B cell (primary cell): ENCODE measurements at regions of chr1 and their contacts with region 1.

Region 1: GRCh38 chr1:175146529-175147213 is 45.9 kb downstream of the KIAA0040 start:
- DNase-seq: peak; percentile 73
- ATAC-seq: peak; percentile 82
- H3K4me3 ChIP-seq: no peak overlapping the region
- H3K4me3 Mint-ChIP-seq: no peak overlapping the region
- H3K27ac ChIP-seq: no peak overlapping the region
- H3K27ac Mint-ChIP-seq: peak overlapping the region; percentile 28
- H3K4me1 ChIP-seq: peaks cover 0 to 12% of the 10 kb centered on the region in 2 donors
- H3K4me1 Mint-ChIP-seq: peaks cover 16% of the 10 kb centered on the region
- H3K27me3 ChIP-seq: peaks cover 0 to 15% (median 7%) of the 10 kb centered on the region in 4 experiments
- H3K27me3 Mint-ChIP-seq: peaks cover 27% of the 10 kb centered on the region
- CTCF ChIP-seq: peak; percentile 91

Region 2: DNA sequence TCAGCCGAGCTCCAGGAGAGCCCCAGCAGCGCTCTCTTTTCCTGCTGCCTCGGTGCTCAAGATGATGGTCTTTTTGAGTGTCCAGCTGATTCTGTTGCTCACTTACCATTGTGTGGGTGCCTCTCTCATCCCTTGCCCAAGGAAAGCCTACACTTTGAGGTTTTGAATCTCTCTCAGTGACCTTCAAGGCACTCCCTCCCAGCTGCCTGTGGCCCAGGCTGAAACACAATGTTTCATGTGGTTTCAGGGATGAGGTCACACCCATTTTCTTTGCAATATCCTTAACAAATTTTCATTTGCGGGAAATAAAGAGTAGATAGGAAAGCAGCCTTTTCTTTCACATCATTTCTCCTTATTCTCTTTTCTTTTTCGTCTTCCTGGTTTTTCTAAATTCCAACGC is 110.8 kb before region 1 on chr1:
- CTCF ChIA-PET with region 1: interaction called, 32 read pairs
- POLR2A ChIA-PET with region 1: no interaction called
- intact Hi-C with region 1: no loop called
- DNase-seq: no peak
- ATAC-seq: no peak
- H3K4me3 ChIP-seq: no peak overlapping the region
- H3K4me3 Mint-ChIP-seq: no peak overlapping the region
- H3K27ac ChIP-seq: no peak overlapping the region
- H3K27ac Mint-ChIP-seq: no peak overlapping the region
- H3K4me1 ChIP-seq: no peaks in the 10 kb centered on the region
- H3K4me1 Mint-ChIP-seq: no peaks in the 10 kb centered on the region
- H3K27me3 ChIP-seq: no peaks in the 10 kb centered on the region
- H3K27me3 Mint-ChIP-seq: peaks cover 22% of the 10 kb centered on the region
- CTCF ChIP-seq: no peak

Region 3: GRCh38 chr1:175075572-175076568 is 70.8 kb before region 1 on chr1:
- CTCF ChIA-PET with region 1: no interaction called
- POLR2A ChIA-PET with region 1: no interaction called
- intact Hi-C with region 1: no loop called
- DNase-seq: no peak
- ATAC-seq: no peak
- H3K4me3 ChIP-seq: no peak overlapping the region
- H3K4me3 Mint-ChIP-seq: no peak overlapping the region
- H3K27ac ChIP-seq: no peak overlapping the region
- H3K27ac Mint-ChIP-seq: no peak overlapping the region
- H3K4me1 ChIP-seq: peaks cover 3 to 5% of the 10 kb centered on the region in 2 donors
- H3K4me1 Mint-ChIP-seq: peaks cover 8% of the 10 kb centered on the region
- H3K27me3 ChIP-seq: peaks cover 0 to 14% (median 6%) of the 10 kb centered on the region in 4 experiments
- H3K27me3 Mint-ChIP-seq: peaks cover 39% of the 10 kb centered on the region
- CTCF ChIP-seq: no peak

Region 4: DNA sequence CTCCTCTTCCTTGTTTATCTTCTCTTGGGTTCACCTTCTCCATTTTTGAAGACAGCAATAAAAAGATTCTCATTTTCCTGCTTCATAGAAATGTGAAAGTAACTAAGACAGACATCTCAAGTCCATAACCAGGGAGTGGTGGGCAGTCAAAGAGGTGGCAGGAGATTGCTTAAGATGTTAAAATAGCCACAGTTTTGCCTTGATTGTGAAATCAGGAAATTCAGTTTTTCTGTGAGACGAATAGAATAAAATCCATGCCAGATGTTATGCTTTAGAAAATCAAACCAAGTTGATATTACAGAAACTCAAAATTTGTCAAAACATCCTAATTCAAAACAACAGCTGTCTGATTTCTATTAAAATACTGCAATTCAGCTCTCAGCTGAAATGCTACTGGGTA is 21.8 kb before region 1 on chr1:
- CTCF ChIA-PET with region 1: interaction called, 12 read pairs
- POLR2A ChIA-PET with region 1: no interaction called
- intact Hi-C with region 1: no loop called
- DNase-seq: no peak
- ATAC-seq: no peak
- H3K4me3 ChIP-seq: no peak overlapping the region
- H3K4me3 Mint-ChIP-seq: no peak overlapping the region
- H3K27ac ChIP-seq: no peak overlapping the region
- H3K27ac Mint-ChIP-seq: no peak overlapping the region
- H3K4me1 ChIP-seq: no peaks in the 10 kb centered on the region
- H3K4me1 Mint-ChIP-seq: no peaks in the 10 kb centered on the region
- H3K27me3 ChIP-seq: no peaks in the 10 kb centered on the region
- H3K27me3 Mint-ChIP-seq: peaks cover 6% of the 10 kb centered on the region
- CTCF ChIP-seq: no peak

Region 5: DNA sequence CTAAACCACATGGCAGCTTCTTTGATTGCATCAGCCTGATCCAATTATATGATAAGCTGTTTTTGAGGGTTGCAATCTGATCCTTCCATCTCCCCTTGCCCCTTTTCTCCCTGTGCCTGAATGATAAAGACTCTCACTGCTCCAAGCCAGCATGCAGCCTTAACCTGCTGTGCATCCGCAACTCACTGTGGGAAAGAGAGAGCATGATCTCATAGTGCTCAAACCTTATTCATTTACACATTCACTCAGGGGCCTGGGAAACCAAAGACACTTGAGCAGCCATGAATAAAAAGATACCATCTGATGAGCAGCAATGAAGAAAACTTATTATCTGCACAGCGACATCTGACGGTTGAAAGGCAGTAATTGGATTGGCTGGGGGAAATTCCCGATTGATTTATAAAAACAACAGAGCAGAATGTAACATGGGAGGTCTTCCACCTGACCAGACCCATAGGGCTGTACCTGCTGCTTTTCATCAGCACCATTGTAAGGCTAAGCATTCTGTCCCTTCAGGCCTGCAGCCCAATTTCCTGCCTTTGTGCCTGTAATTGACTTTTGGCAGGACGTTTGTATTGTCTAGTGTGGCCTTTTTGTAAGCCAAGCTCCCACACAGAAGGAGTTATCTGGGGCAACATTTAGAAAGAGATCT is 16.5 kb before region 1 on chr1:
- CTCF ChIA-PET with region 1: interaction called, 12 read pairs
- POLR2A ChIA-PET with region 1: no interaction called
- intact Hi-C with region 1: no loop called
- DNase-seq: no peak
- ATAC-seq: no peak
- H3K4me3 ChIP-seq: no peak overlapping the region
- H3K4me3 Mint-ChIP-seq: no peak overlapping the region
- H3K27ac ChIP-seq: no peak overlapping the region
- H3K27ac Mint-ChIP-seq: no peak overlapping the region
- H3K4me1 ChIP-seq: peaks cover 0 to 2% of the 10 kb centered on the region in 2 donors
- H3K4me1 Mint-ChIP-seq: peaks cover 6% of the 10 kb centered on the region
- H3K27me3 ChIP-seq: no peaks in the 10 kb centered on the region
- H3K27me3 Mint-ChIP-seq: peaks cover 5% of the 10 kb centered on the region
- CTCF ChIP-seq: no peak

Region 6: GRCh38 chr1:175338387-175339135 is 191.9 kb after region 1 on chr1:
- CTCF ChIA-PET with region 1: interaction called, 82 read pairs
- POLR2A ChIA-PET with region 1: no interaction called
- intact Hi-C with region 1: no loop called
- DNase-seq: peak; percentile 66
- ATAC-seq: peak; percentile 97
- H3K4me3 ChIP-seq: no peak overlapping the region
- H3K4me3 Mint-ChIP-seq: no peak overlapping the region
- H3K27ac ChIP-seq: no peak overlapping the region
- H3K27ac Mint-ChIP-seq: no peak overlapping the region
- H3K4me1 ChIP-seq: peaks cover 0 to 2% of the 10 kb centered on the region in 2 donors
- H3K4me1 Mint-ChIP-seq: peaks cover 2% of the 10 kb centered on the region
- H3K27me3 ChIP-seq: peaks cover 0 to 4% (median 1%) of the 10 kb centered on the region in 4 experiments
- H3K27me3 Mint-ChIP-seq: peaks cover 13% of the 10 kb centered on the region
- CTCF ChIP-seq: peak; percentile 80

Region 7: DNA sequence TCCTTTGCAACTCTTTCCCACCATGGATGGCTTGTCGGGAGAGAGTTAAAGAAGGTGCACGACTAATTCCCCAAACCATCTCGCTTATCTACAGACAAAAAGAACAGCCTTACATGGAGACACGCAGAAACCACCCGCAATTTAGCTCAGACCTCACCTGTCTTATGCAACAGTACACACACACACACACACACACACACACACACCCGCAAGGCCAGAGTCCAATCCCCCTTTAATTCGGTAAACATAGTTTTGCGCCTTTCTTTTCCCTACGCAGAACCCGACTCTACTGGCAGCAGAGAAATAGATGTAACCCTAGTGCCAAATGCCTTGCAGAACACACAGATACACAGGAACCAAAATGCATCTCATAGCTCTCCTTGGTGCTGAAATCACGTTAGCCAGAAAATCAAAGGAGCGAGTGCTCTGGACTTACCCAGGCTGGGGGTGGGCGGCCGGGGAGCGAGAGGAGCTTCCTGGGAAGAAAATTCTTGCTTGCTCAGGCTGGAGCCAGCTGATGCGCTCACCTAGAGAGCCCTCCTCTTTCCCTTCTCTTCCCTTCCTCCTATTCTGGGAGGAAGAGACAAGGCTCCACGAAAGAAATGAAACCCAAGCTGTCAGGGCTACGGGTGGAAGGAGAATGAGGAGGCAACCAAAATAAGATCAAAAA is 596.3 kb after region 1 on chr1:
- CTCF ChIA-PET with region 1: interaction called, 17 read pairs
- POLR2A ChIA-PET with region 1: no interaction called
- intact Hi-C with region 1: loop called (anchors 5 kb)
- DNase-seq: peak; percentile 5
- ATAC-seq: no peak
- H3K4me3 ChIP-seq: no peak overlapping the region
- H3K4me3 Mint-ChIP-seq: no peak overlapping the region
- H3K27ac ChIP-seq: no peak overlapping the region
- H3K27ac Mint-ChIP-seq: no peak overlapping the region
- H3K4me1 ChIP-seq: peaks cover 0 to 4% of the 10 kb centered on the region in 2 donors
- H3K4me1 Mint-ChIP-seq: peaks cover 3% of the 10 kb centered on the region
- H3K27me3 ChIP-seq: peaks cover 0 to 19% (median 1%) of the 10 kb centered on the region in 4 experiments
- H3K27me3 Mint-ChIP-seq: peaks cover 38% of the 10 kb centered on the region
- CTCF ChIP-seq: no peak